HepG2 (cell line): ENCODE measurements at regions of chr16 and their contacts with region 1.

Region 1: GRCh38 chr16:56789360-56789759 is 59.4 kb downstream of the NUP93 start:
- DNase-seq: peak; percentile 69
- ATAC-seq: peak; percentile 88
- H3K4me3 ChIP-seq: no peak overlapping the region
- H3K27ac ChIP-seq: no peak overlapping the region
- H3K4me1 ChIP-seq: peaks cover 13% of the 10 kb centered on the region; the same call in 1 of the 2 replicates
- H3K27me3 ChIP-seq: no peaks in the 10 kb centered on the region
- CTCF ChIP-seq: peak; percentile 74
- EP300 ChIP-seq: no peak
- POLR2A ChIP-seq: no peak
- RAD21 ChIP-seq: peak; percentile 79

Region 2: GRCh38 chr16:56576585-56577293 is 212.6 kb before region 1 on chr16:
- CTCF ChIA-PET with region 1: no interaction called
- POLR2A ChIA-PET with region 1: no interaction called
- in situ Hi-C with region 1: no loop called
- intact Hi-C with region 1: loop called (anchors 5 kb)
- DNase-seq: peak; percentile 69
- ATAC-seq: peak; percentile 100
- H3K4me3 ChIP-seq: no peak overlapping the region
- H3K27ac ChIP-seq: no peak overlapping the region
- H3K4me1 ChIP-seq: no peaks in the 10 kb centered on the region
- H3K27me3 ChIP-seq: peaks cover 0 to 3% of the 10 kb centered on the region in 2 experiments; a peak in 2 of 5 replicates
- CTCF ChIP-seq: peak; percentile 99
- EP300 ChIP-seq: no peak
- POLR2A ChIP-seq: no peak
- RAD21 ChIP-seq: peak; percentile 93

Region 3: GRCh38 chr16:56851671-56852400 is 62.5 kb after region 1 on chr16:
- CTCF ChIA-PET with region 1: interaction called, 17 read pairs
- POLR2A ChIA-PET with region 1: no interaction called
- in situ Hi-C with region 1: no loop called
- intact Hi-C with region 1: loop called (anchors 1 kb)
- DNase-seq: peak; percentile 35
- ATAC-seq: no peak
- H3K4me3 ChIP-seq: no peak overlapping the region
- H3K27ac ChIP-seq: peak overlapping the region; percentile 7
- H3K4me1 ChIP-seq: peaks cover 78% of the 10 kb centered on the region
- H3K27me3 ChIP-seq: no peaks in the 10 kb centered on the region
- CTCF ChIP-seq: peak; percentile 53
- EP300 ChIP-seq: no peak
- POLR2A ChIP-seq: no peak
- RAD21 ChIP-seq: peak; percentile 53; the same call in 1 of the 2 replicates

Region 4: GRCh38 chr16:56866943-56867830 is 77.8 kb after region 1 on chr16:
- CTCF ChIA-PET with region 1: interaction called, 27 read pairs
- POLR2A ChIA-PET with region 1: interaction called, 4 read pairs
- in situ Hi-C with region 1: loop called (anchors 5 kb)
- intact Hi-C with region 1: loop called (anchors 1 kb)
- DNase-seq: peak; percentile 70
- ATAC-seq: peak; percentile 6; the same call in 1 of the 3 replicates
- H3K4me3 ChIP-seq: peak overlapping the region in 2 of 3 experiments; percentile 29 to 50; a peak in 4 of 6 replicates
- H3K27ac ChIP-seq: no peak overlapping the region
- H3K4me1 ChIP-seq: peaks cover 56% of the 10 kb centered on the region
- H3K27me3 ChIP-seq: no peaks in the 10 kb centered on the region
- CTCF ChIP-seq: peak; percentile 74
- EP300 ChIP-seq: no peak
- POLR2A ChIP-seq: no peak
- RAD21 ChIP-seq: peak; percentile 59

Region 5: GRCh38 chr16:56950881-56951771 is 161.8 kb after region 1 on chr16:
- CTCF ChIA-PET with region 1: interaction called, 4 read pairs
- POLR2A ChIA-PET with region 1: no interaction called
- in situ Hi-C with region 1: no loop called
- intact Hi-C with region 1: loop called (anchors 1 kb)
- DNase-seq: peak; percentile 61
- ATAC-seq: peak; percentile 72
- H3K4me3 ChIP-seq: peak overlapping the region in 1 of 3 experiments; percentile 15; a peak in 1 of 6 replicates
- H3K27ac ChIP-seq: no peak overlapping the region
- H3K4me1 ChIP-seq: peaks cover 53% of the 10 kb centered on the region
- H3K27me3 ChIP-seq: no peaks in the 10 kb centered on the region
- CTCF ChIP-seq: peak; percentile 98
- EP300 ChIP-seq: no peak
- POLR2A ChIP-seq: no peak
- RAD21 ChIP-seq: peak; percentile 90